Caco-2 (cell line): ENCODE measurements at regions of chr11 and their contacts with region 1.

Region 1: GRCh38 chr11:85694386-85694980 is 8.5 kb upstream of the CCDC89 start:
- DNase-seq: peak in 1 of 2 experiments; percentile 59
- H3K4me3 ChIP-seq: no peak overlapping the region
- H3K4me3 Mint-ChIP-seq: no peak overlapping the region
- H3K27ac Mint-ChIP-seq: no peak overlapping the region
- H3K4me1 ChIP-seq: no peaks in the 10 kb centered on the region
- H3K4me1 Mint-ChIP-seq: no peaks in the 10 kb centered on the region
- H3K27me3 ChIP-seq: no peaks in the 10 kb centered on the region
- H3K27me3 Mint-ChIP-seq: no peaks in the 10 kb centered on the region
- CTCF ChIP-seq: peak; percentile 79 to 85

Region 2: DNA sequence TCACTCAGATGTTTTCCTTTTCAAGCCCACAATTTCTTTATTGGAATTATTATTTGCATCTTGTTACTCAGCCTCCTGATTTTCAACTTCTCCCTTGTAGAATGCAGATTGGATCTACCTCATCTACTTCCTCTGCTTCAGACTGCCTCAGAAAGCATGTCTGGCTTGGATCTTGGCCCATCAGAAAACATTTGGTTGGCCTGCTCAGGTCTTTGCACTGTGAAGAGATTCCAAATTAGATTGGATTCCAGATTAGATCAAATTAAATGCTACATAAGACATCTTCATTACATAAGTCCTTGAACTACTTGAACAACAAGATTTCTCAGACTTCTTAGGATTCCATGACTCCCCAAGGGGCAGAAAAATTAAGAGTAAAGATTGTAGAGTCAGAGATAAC is 425.4 kb before region 1 on chr11:
- CTCF ChIA-PET with region 1: no interaction called
- POLR2A ChIA-PET with region 1: no interaction called
- intact Hi-C with region 1: no loop called
- DNase-seq: no peak
- H3K4me3 ChIP-seq: no peak overlapping the region
- H3K4me3 Mint-ChIP-seq: no peak overlapping the region
- H3K27ac Mint-ChIP-seq: no peak overlapping the region
- H3K4me1 ChIP-seq: no peaks in the 10 kb centered on the region
- H3K4me1 Mint-ChIP-seq: no peaks in the 10 kb centered on the region
- H3K27me3 ChIP-seq: no peaks in the 10 kb centered on the region
- H3K27me3 Mint-ChIP-seq: peaks cover 3% of the 10 kb centered on the region
- CTCF ChIP-seq: no peak

Region 3: DNA sequence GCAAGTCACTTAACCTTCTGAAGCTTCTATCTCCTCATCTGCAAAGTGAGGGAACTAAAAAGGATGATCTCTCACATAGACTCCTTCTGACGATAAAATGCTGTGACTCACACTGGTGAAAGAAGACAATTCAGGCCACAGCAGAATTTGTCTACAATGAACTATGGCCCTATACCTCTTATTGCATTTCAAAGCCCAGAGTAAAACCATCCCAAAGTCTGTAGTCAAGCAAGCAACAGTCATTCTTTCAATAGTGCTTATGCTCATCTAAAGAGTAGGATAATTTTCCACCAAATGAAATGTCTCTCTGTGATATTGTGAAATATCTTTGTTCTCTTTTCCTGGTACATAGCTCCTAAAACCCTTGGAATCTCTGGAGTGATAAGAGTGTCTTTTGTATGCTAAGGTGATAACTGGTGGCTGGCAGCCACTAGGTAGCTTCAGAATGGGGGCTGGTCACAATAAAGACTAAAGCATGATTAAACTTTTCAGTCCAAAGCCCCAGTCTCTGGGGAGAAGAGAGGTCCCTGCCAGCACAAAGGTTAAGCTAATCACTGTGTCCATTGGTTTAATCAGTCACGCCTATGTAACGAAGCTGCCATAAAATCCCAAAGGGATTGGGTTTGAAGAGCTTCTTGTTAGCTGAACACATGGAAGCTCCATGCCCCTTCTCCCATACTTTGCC is 85.6 kb after region 1 on chr11:
- CTCF ChIA-PET with region 1: no interaction called
- POLR2A ChIA-PET with region 1: no interaction called
- intact Hi-C with region 1: loop called (anchors 1 kb)
- DNase-seq: peak; percentile 79 to 89
- H3K4me3 ChIP-seq: no peak overlapping the region
- H3K4me3 Mint-ChIP-seq: peak overlapping the region; percentile 44
- H3K27ac Mint-ChIP-seq: peak overlapping the region; percentile 74
- H3K4me1 ChIP-seq: peaks cover 65% of the 10 kb centered on the region
- H3K4me1 Mint-ChIP-seq: peaks cover 64% of the 10 kb centered on the region
- H3K27me3 ChIP-seq: no peaks in the 10 kb centered on the region
- H3K27me3 Mint-ChIP-seq: no peaks in the 10 kb centered on the region
- CTCF ChIP-seq: no peak

Region 4: GRCh38 chr11:85826116-85826855 is 131.8 kb after region 1 on chr11:
- CTCF ChIA-PET with region 1: interaction called, 18 read pairs
- POLR2A ChIA-PET with region 1: no interaction called
- intact Hi-C with region 1: loop called (anchors 1 kb)
- DNase-seq: peak; percentile 78 to 80
- H3K4me3 ChIP-seq: no peak overlapping the region
- H3K4me3 Mint-ChIP-seq: peak overlapping the region; percentile 14
- H3K27ac Mint-ChIP-seq: peak overlapping the region; percentile 17
- H3K4me1 ChIP-seq: peaks cover 47% of the 10 kb centered on the region
- H3K4me1 Mint-ChIP-seq: peaks cover 37% of the 10 kb centered on the region
- H3K27me3 ChIP-seq: no peaks in the 10 kb centered on the region
- H3K27me3 Mint-ChIP-seq: no peaks in the 10 kb centered on the region
- CTCF ChIP-seq: peak; percentile 75 to 90

Region 5: DNA sequence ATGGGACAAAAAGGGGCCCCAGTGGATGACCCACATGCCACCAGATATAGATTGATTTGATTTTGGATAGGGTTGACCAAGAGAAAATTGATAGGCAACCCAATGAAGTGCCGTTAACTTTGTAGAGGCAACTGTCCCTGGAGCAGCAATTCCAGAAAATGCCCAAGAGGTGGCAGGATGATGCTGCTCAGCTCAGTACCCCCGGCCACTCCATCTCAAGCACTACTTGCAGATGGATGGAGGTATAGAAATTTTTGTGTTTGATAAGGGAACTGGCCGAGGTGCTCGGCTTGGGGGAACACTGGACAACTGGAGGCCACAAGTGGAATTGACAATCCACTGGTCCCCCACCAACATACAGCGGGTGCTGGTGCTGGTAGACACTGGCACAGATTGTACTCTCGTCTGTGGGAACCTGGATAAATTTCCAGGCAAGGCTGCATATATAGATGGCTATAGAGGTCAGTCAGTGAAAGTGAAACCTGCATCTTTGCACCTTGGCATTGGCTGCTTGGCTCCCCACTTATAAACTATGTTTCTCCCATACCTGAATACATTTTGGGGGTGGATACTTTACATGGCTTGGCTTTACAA is 247.0 kb after region 1 on chr11:
- CTCF ChIA-PET with region 1: no interaction called
- POLR2A ChIA-PET with region 1: no interaction called
- intact Hi-C with region 1: loop called (anchors 10 kb)
- DNase-seq: peak; percentile 75 to 78
- H3K4me3 ChIP-seq: no peak overlapping the region
- H3K4me3 Mint-ChIP-seq: no peak overlapping the region
- H3K27ac Mint-ChIP-seq: no peak overlapping the region
- H3K4me1 ChIP-seq: no peaks in the 10 kb centered on the region
- H3K4me1 Mint-ChIP-seq: peaks cover 6% of the 10 kb centered on the region
- H3K27me3 ChIP-seq: no peaks in the 10 kb centered on the region
- H3K27me3 Mint-ChIP-seq: no peaks in the 10 kb centered on the region
- CTCF ChIP-seq: peak; percentile 80 to 81

Region 6: DNA sequence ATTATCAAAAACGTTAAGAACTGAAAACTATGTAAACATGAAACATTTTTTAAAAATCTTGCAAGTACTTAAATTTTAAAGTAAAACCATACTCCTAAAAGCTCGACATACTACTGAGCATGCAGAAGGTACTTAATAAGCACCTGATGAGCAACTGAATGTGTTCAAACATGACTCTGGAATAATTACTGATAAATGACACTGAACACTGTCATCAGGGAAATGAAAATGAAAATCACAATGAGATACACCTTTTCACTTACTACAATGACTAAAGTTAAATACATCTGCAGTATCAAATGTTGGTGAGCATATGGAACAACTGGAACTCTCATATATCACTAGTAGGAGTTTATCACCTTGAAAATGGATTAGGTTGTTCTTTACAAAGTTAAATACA is 309.2 kb after region 1 on chr11:
- CTCF ChIA-PET with region 1: no interaction called
- POLR2A ChIA-PET with region 1: no interaction called
- intact Hi-C with region 1: loop called (anchors 10 kb)
- DNase-seq: no peak
- H3K4me3 ChIP-seq: no peak overlapping the region
- H3K4me3 Mint-ChIP-seq: no peak overlapping the region
- H3K27ac Mint-ChIP-seq: peak overlapping the region; percentile 22
- H3K4me1 ChIP-seq: peaks cover 26% of the 10 kb centered on the region
- H3K4me1 Mint-ChIP-seq: peaks cover 30% of the 10 kb centered on the region
- H3K27me3 ChIP-seq: no peaks in the 10 kb centered on the region
- H3K27me3 Mint-ChIP-seq: no peaks in the 10 kb centered on the region
- CTCF ChIP-seq: no peak

Region 7: GRCh38 chr11:86291466-86292262 is 597.2 kb after region 1 on chr11:
- CTCF ChIA-PET with region 1: no interaction called
- POLR2A ChIA-PET with region 1: no interaction called
- intact Hi-C with region 1: loop called (anchors 1 kb)
- DNase-seq: peak; percentile 63 to 82
- H3K4me3 ChIP-seq: no peak overlapping the region
- H3K4me3 Mint-ChIP-seq: no peak overlapping the region
- H3K27ac Mint-ChIP-seq: no peak overlapping the region
- H3K4me1 ChIP-seq: 0 out of 2 replicates have a peak, but pooled peaks cover 4% of the 10 kb centered on the region
- H3K4me1 Mint-ChIP-seq: no peaks in the 10 kb centered on the region
- H3K27me3 ChIP-seq: no peaks in the 10 kb centered on the region
- H3K27me3 Mint-ChIP-seq: no peaks in the 10 kb centered on the region
- CTCF ChIP-seq: peak; percentile 92 to 98